ENCODE measurements at regions of chr9 and their contacts with region 1.

Region 1: GRCh38 chr9:133742849-133743444 is 4.8 kb upstream of the SARDH start:
- DNase-seq: peak; percentile 83
- ATAC-seq: peak; percentile 52
- H3K4me3 ChIP-seq: no peak overlapping the region
- H3K27ac ChIP-seq: peak overlapping the region; percentile 17
- H3K4me1 ChIP-seq: peaks cover 85% of the 10 kb centered on the region
- H3K27me3 ChIP-seq: no peaks in the 10 kb centered on the region
- CTCF ChIP-seq: peak; percentile 98
- EP300 ChIP-seq: no peak
- POLR2A ChIP-seq: no peak
- RAD21 ChIP-seq: peak; percentile 89

Region 2: DNA sequence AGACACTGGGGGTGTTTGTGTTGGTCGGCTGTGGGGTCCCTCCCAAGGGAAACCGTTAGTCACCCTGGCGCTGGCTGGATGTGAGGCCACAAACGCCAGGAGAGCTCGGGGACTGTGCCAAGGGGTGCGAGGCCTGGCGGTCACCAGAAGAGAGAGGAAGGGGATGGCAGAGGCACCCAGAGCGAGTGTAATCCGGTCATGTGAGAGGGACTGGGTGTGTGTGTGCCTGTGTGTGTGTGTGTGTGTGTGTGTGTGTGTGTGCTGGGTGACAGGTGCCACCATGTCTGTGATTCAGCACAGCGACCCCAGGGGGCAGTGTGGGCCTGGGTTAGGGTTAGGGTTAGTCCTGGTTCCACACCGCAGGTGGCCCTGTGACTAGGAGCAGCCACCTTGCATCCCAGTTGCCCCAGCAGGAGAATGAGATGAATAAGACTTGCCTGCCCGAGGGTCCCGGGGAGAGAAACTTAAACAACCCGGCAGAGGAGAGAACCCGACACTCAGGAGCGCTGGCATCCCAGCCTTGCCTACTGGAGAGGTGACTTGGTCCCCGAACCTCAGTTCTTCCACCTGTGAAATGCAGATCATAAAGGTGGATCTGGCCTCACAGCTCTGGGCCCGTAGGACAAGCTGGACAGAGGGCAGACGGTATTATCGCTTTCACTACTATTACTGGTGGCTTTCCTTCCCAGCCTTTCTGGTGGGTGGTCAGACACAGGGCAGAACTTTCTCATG is 209.8 kb before region 1 on chr9:
- CTCF ChIA-PET with region 1: no interaction called
- POLR2A ChIA-PET with region 1: interaction called, 3 read pairs
- in situ Hi-C with region 1: loop called (anchors 25 kb)
- intact Hi-C with region 1: no loop called
- DNase-seq: peak; percentile 75
- ATAC-seq: peak; percentile 69
- H3K4me3 ChIP-seq: peak overlapping the region in 1 of 3 experiments; percentile 72; a peak in 2 of 6 replicates
- H3K27ac ChIP-seq: no peak overlapping the region
- H3K4me1 ChIP-seq: peaks cover 38% of the 10 kb centered on the region
- H3K27me3 ChIP-seq: peaks cover 17 to 42% of the 10 kb centered on the region in 2 experiments; a peak in 4 of 5 replicates
- CTCF ChIP-seq: peak; percentile 95
- EP300 ChIP-seq: no peak
- POLR2A ChIP-seq: no peak
- RAD21 ChIP-seq: peak; percentile 78

Region 3: GRCh38 chr9:133768859-133769425 is 26.0 kb after region 1 on chr9:
- CTCF ChIA-PET with region 1: interaction called, 16 read pairs
- POLR2A ChIA-PET with region 1: interaction called, 54 read pairs
- in situ Hi-C with region 1: no loop called
- intact Hi-C with region 1: loop called (anchors 2 kb)
- DNase-seq: peak; percentile 83
- ATAC-seq: peak; percentile 84
- H3K4me3 ChIP-seq: no peak overlapping the region
- H3K27ac ChIP-seq: peak overlapping the region; percentile 36
- H3K4me1 ChIP-seq: peaks cover 17% of the 10 kb centered on the region
- H3K27me3 ChIP-seq: no peaks in the 10 kb centered on the region
- CTCF ChIP-seq: peak; percentile 99
- EP300 ChIP-seq: peak in 1 of 2 experiments; percentile 65; a peak in 2 of 4 replicates
- POLR2A ChIP-seq: no peak
- RAD21 ChIP-seq: peak; percentile 95

Region 4: DNA sequence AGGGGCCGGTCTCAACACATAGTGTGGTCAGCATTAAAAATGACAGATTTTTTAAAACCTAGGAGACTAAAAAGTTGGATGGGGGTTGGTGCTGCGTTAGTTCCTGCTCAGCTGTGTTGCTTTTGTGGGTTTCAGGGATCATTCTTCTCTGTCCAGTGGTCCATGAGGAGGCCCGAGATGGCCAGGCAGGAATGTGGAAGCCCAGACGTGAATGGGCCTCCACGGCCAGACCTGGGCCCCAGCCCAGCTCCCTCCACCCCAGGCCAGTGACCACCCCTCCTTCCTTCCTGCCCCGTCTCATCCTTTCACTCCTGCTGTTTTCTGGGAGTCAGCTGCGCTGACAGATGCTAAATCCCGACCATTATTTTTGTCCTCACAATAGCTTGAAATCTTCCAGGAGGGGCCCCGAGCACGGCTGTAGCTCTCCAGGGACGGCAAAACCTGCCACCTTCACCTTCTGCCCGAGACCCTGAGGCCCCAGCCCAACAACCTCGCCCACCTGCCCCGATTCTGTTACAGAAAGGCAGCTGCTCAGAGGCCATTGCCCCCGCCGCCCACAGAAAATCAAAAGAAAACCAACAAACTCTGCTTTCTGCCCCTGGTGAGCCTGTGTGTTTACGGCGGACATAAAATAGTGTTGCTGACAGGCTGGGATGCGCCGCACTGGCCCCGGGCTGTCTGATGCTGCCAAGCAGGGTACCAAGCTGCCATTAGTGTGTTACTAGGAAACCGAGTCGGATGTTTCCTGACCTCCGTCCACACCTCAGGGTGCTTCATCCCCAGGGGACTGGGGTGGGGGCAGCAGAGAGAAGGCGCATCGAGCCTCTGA is 78.9 kb after region 1 on chr9:
- CTCF ChIA-PET with region 1: no interaction called
- POLR2A ChIA-PET with region 1: no interaction called
- in situ Hi-C with region 1: no loop called
- intact Hi-C with region 1: no loop called
- DNase-seq: no peak
- ATAC-seq: no peak
- H3K4me3 ChIP-seq: no peak overlapping the region
- H3K27ac ChIP-seq: no peak overlapping the region
- H3K4me1 ChIP-seq: peaks cover 15% of the 10 kb centered on the region
- H3K27me3 ChIP-seq: no peaks in the 10 kb centered on the region
- CTCF ChIP-seq: no peak
- EP300 ChIP-seq: no peak
- POLR2A ChIP-seq: no peak
- RAD21 ChIP-seq: no peak

Measured in HepG2 (cell line).